ENCODE measurements at regions of chr1 and their contacts with region 1.

Region 1: DNA sequence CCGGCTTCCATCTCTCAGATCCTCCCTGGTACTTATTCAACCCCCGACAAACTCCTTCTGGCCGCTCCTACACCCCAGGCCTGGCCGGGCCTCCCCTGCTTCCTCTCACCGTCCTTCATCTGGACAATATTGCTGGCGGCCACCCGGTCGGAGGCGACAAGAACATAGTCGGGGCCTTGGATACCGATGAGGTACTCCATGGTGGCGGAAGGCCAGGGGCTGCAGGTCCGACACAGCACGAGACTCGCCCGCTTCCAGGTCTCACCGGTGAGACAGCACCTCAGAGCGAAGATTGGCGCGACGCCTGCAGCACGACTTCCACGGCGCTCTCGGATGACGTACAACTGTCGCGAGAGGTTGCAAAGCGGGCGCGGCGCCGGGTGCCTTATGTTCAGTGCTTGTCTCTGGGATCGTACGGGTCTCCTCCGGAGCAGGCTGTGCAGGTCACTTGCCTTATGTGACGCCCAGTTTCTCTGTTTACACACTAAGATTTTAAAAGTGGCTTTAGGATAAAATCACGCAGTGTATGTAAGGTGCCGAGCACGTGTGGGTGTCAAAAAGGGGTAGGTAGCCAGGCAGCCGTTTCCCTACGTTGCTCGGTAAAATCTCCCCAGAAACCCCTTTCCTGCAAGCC is at the start of gene PSMB2:
- DNase-seq: peak; percentile 95
- H3K4me3 Mint-ChIP-seq: peak within 1 kb of the TSS; percentile 99
- H3K27ac Mint-ChIP-seq: peak within 1 kb of the TSS; percentile 100
- H3K4me1 Mint-ChIP-seq: peaks cover 10% of the 10 kb centered on the region
- H3K27me3 Mint-ChIP-seq: peaks cover 23% of the 10 kb centered on the region
- CTCF ChIP-seq: no peak
- total RNA-seq, gene PSMB2: 106 and 109 TPM in 2 replicates

Region 2: GRCh38 chr1:35715568-35716002 is 74.2 kb after region 1 on chr1:
- CTCF ChIA-PET with region 1: interaction called, 9 read pairs
- intact Hi-C with region 1: loop called (anchors 5 kb)
- DNase-seq: peak; percentile 79
- H3K4me3 Mint-ChIP-seq: no peak overlapping the region
- H3K27ac Mint-ChIP-seq: no peak overlapping the region
- H3K4me1 Mint-ChIP-seq: peaks cover 24% of the 10 kb centered on the region
- H3K27me3 Mint-ChIP-seq: no peaks in the 10 kb centered on the region
- CTCF ChIP-seq: peak; percentile 65

Region 3: DNA sequence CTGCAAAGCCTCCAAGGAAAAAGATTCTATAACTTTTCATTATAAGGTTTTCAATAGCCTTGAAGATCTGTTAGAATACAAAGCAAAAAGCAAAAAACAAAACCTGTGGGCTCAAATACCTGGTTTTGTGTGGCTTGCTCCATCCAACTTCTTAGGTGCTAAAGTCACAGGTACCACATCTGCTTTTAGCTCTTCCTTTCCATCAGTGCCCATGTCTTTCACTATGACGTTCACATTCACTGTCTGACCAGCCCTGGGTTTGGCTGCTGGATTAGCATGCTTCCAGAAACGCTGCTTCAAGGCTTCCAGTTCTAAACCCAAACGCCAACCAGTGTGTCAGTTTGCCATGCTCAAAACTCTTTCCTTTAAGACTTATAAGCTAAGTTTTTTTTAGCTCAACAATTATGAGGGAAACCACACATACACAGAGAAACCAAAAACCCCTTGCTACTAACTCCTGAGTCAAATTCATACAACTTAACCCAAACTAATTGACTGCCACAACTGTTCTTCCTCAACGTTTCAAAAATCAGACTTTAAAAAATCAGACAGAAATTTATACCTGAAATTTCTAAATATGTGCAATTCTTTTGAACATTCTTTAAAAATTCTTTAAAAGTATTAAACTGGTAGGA is 112.4 kb after region 1 on chr1:
- CTCF ChIA-PET with region 1: no interaction called
- intact Hi-C with region 1: no loop called
- DNase-seq: no peak
- H3K4me3 Mint-ChIP-seq: no peak overlapping the region
- H3K27ac Mint-ChIP-seq: no peak overlapping the region
- H3K4me1 Mint-ChIP-seq: no peaks in the 10 kb centered on the region
- H3K27me3 Mint-ChIP-seq: no peaks in the 10 kb centered on the region
- CTCF ChIP-seq: no peak

Region 4: DNA sequence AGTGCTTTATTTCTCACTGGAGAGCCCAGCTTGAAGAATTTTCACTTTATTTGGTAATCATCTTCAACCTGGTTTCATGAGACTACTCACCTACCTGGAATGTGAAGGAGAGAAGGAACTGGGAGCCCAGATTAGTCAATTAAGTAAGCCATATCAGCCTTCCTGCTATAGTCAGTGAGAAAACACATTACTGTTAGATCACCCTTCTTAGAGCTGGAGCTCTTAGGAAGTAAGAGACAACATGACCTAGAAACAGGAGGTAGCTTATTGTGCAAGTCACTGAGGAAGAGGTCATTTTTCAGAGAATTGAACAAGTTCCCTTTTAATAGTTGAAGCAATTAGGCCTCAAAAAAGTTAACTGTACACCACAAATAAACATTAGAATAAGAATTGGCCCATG is 393.3 kb after region 1 on chr1:
- CTCF ChIA-PET with region 1: no interaction called
- intact Hi-C with region 1: no loop called
- DNase-seq: peak; percentile 10
- H3K4me3 Mint-ChIP-seq: no peak overlapping the region
- H3K27ac Mint-ChIP-seq: peak overlapping the region; percentile 47
- H3K4me1 Mint-ChIP-seq: no peaks in the 10 kb centered on the region
- H3K27me3 Mint-ChIP-seq: no peaks in the 10 kb centered on the region
- CTCF ChIP-seq: no peak

Measured in Calu3 (cell line).